HepG2 (cell line): ENCODE measurements at regions of chr7 and their contacts with region 1.

Region 1: DNA sequence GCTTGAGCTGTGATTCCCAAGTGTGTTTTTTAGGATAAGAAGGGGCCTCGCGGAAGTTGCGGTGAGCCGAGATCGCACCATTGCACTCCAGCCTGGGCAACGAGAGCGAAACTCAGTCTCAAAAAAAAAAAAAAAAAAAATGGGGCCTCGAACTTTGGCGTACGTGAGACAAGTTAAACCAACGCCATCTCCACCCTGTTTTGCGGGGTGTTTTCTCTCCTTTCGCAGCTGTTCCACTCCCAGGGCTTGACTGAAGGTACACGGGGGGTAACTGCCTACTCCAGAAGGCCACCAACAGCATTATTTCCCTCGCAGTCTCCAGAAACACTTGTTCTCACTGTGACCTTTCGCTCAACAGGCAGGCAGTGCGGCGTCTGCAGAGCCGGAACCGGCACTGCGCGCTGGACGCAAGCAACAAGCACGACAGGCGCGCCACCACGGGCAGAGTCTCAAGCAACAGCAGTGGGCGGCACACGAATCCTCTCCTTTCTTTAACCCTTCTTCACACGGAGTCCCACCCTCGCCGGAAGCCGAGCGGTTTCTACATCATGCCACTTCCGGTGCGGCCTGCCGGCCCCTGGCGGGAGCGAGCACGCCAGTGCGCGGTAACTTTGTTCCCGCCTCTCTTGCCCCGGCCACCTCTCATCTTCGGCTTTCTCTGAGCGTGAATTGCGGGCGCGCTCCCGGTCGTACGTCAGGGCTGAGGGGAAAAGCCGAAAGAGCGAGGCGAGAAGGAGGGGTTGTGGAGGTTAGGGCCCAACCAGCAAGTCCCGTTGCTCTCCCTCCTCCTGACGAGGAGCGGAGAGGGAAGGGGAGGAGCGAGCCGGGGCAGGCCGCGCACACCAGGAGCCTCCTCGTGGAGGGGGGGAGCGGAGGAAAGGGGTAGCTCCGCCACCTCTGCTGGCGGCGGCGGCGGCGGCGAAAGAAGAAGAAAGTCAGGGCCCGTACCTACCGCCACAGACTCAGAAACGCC is 814 bp upstream of the CDK13 start:
- DNase-seq: peak; percentile 98
- ATAC-seq: peak; percentile 86
- H3K4me3 ChIP-seq: peak overlapping the region; percentile 89 to 100 (median 98)
- H3K27ac ChIP-seq: peak overlapping the region; percentile 100
- H3K4me1 ChIP-seq: peaks cover 11% of the 10 kb centered on the region
- H3K27me3 ChIP-seq: no peaks in the 10 kb centered on the region; a peak in 1 of 5 replicates
- CTCF ChIP-seq: peak; percentile 45; the same call in 1 of the 2 replicates
- EP300 ChIP-seq: 0 out of 4 replicates have a peak, but pooled peaks of 1 of the 2 experiments have one; percentile 10
- POLR2A ChIP-seq: peak in 1 of 2 experiments; percentile 95; a peak in 2 of 4 replicates
- RAD21 ChIP-seq: 0 out of 2 replicates have a peak, but pooled peaks have one; percentile 10

Region 2: GRCh38 chr7:39527296-39527695 is 421.9 kb before region 1 on chr7:
- CTCF ChIA-PET with region 1: no interaction called
- POLR2A ChIA-PET with region 1: no interaction called
- in situ Hi-C with region 1: no loop called
- intact Hi-C with region 1: no loop called
- DNase-seq: no peak
- ATAC-seq: no peak
- H3K4me3 ChIP-seq: no peak overlapping the region
- H3K27ac ChIP-seq: no peak overlapping the region
- H3K4me1 ChIP-seq: 0 out of 2 replicates have a peak, but pooled peaks cover 6% of the 10 kb centered on the region
- H3K27me3 ChIP-seq: no peaks in the 10 kb centered on the region
- CTCF ChIP-seq: no peak
- EP300 ChIP-seq: no peak
- POLR2A ChIP-seq: no peak
- RAD21 ChIP-seq: no peak

Region 3: DNA sequence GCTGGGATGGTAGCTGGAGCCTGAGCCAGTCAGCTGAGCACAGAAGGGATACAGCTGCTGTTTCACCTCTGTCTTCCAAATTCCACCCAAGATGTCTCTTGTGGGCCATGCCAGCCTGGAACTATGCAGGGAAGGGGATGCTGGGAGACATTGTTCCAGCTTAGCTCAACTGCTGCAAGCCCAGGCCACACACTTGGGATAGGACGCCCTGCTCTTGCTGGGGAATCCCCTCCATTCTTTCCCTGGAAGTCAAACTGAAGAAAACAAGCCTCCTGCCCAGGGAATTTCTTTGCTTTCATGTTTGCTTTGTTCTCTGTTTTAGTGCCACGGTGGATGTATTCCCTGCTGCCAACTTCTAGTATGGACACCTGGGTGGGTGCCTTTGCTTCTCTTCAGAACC is 54.3 kb before region 1 on chr7:
- CTCF ChIA-PET with region 1: no interaction called
- POLR2A ChIA-PET with region 1: interaction called, 3 read pairs
- in situ Hi-C with region 1: no loop called
- intact Hi-C with region 1: loop called (anchors 2 kb)
- DNase-seq: no peak
- ATAC-seq: no peak
- H3K4me3 ChIP-seq: no peak overlapping the region
- H3K27ac ChIP-seq: no peak overlapping the region
- H3K4me1 ChIP-seq: 0 out of 2 replicates have a peak, but pooled peaks cover 4% of the 10 kb centered on the region
- H3K27me3 ChIP-seq: peaks cover 0 to 9% of the 10 kb centered on the region in 2 experiments; a peak in 2 of 5 replicates
- CTCF ChIP-seq: no peak
- EP300 ChIP-seq: no peak
- POLR2A ChIP-seq: no peak
- RAD21 ChIP-seq: no peak

Region 4: GRCh38 chr7:40000734-40001315 is 51.6 kb after region 1 on chr7:
- CTCF ChIA-PET with region 1: no interaction called
- POLR2A ChIA-PET with region 1: no interaction called
- in situ Hi-C with region 1: no loop called
- intact Hi-C with region 1: loop called (anchors 5 kb)
- DNase-seq: no peak
- ATAC-seq: no peak
- H3K4me3 ChIP-seq: no peak overlapping the region
- H3K27ac ChIP-seq: no peak overlapping the region
- H3K4me1 ChIP-seq: no peaks in the 10 kb centered on the region
- H3K27me3 ChIP-seq: no peaks in the 10 kb centered on the region
- CTCF ChIP-seq: no peak
- EP300 ChIP-seq: no peak
- POLR2A ChIP-seq: no peak
- RAD21 ChIP-seq: no peak

Region 5: DNA sequence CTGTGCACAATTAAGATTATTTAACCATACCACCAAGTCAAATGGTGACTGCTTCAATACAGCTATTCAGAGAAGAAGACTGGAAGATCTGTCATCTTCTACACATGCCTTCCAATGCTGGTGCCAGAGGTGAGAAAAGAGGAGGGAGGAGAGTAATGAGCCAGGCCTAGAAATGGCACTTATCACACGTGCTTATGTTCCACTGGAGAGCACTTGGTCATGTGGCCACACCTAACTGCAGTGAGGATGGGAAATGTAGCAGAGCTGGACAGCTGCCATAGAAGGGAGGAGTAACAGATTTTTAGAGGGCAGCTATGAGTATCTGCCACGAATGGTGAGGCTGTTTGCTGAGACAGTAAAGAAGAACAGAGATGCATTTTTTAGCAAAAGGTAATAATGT is 108.0 kb after region 1 on chr7:
- CTCF ChIA-PET with region 1: interaction called, 10 read pairs
- POLR2A ChIA-PET with region 1: interaction called, 5 read pairs
- in situ Hi-C with region 1: loop called (anchors 5 kb)
- intact Hi-C with region 1: loop called (anchors 2 kb)
- DNase-seq: no peak
- ATAC-seq: no peak
- H3K4me3 ChIP-seq: no peak overlapping the region
- H3K27ac ChIP-seq: no peak overlapping the region
- H3K4me1 ChIP-seq: no peaks in the 10 kb centered on the region
- H3K27me3 ChIP-seq: no peaks in the 10 kb centered on the region
- CTCF ChIP-seq: no peak
- EP300 ChIP-seq: no peak
- POLR2A ChIP-seq: no peak
- RAD21 ChIP-seq: no peak

Region 6: GRCh38 chr7:40134428-40135316 is 185.4 kb after region 1 on chr7 and contains the starts of genes MPLKIP and SUGCT:
- CTCF ChIA-PET with region 1: no interaction called
- POLR2A ChIA-PET with region 1: interaction called, 4 read pairs
- in situ Hi-C with region 1: no loop called
- intact Hi-C with region 1: loop called (anchors 2 kb)
- DNase-seq: peak; percentile 74
- ATAC-seq: peak; percentile 89
- H3K4me3 ChIP-seq: peak within 1 kb of the TSS; percentile 73 to 86 (median 84)
- H3K27ac ChIP-seq: peak within 1 kb of the TSS; percentile 92
- H3K4me1 ChIP-seq: peaks cover 40% of the 10 kb centered on the region
- H3K27me3 ChIP-seq: no peaks in the 10 kb centered on the region; a peak in 1 of 5 replicates
- CTCF ChIP-seq: peak; percentile 74
- EP300 ChIP-seq: 0 out of 4 replicates have a peak, but pooled peaks of 1 of the 2 experiments have one; percentile 13
- POLR2A ChIP-seq: peak; percentile 74
- RAD21 ChIP-seq: no peak
- total RNA-seq, gene MPLKIP: 45.7 and 66.9 TPM in 2 replicates
- total RNA-seq, gene SUGCT: 22.2 and 23.6 TPM in 2 replicates